H1 (cell line): ENCODE measurements at regions of chr3 and their contacts with region 1.

Region 1: GRCh38 chr3:128680602-128681368 is 30.2 kb upstream of the RPN1 start:
- DNase-seq: peak; percentile 98 to 99
- H3K4me3 ChIP-seq: peak overlapping the region; percentile 29 to 77 (median 66)
- H3K27ac ChIP-seq: peak overlapping the region; percentile 99
- H3K4me1 ChIP-seq: peaks cover 0 to 4% (median 2%) of the 10 kb centered on the region in 4 experiments; a peak in 1 of 7 replicates
- H3K27me3 ChIP-seq: peaks cover 3 to 17% (median 12%) of the 10 kb centered on the region in 4 experiments
- CTCF ChIP-seq: peak; percentile 95 to 100 (median 99)
- EP300 ChIP-seq: peak in 1 of 2 experiments; percentile 5; a peak in 2 of 3 replicates
- POLR2A ChIP-seq: peak; percentile 78 to 91
- RAD21 ChIP-seq: peak; percentile 78 to 79

Region 2: GRCh38 chr3:128383316-128384235 is 297.2 kb before region 1 on chr3:
- CTCF ChIA-PET with region 1: no interaction called
- POLR2A ChIA-PET with region 1: no interaction called
- DNase-seq: no peak
- H3K4me3 ChIP-seq: no peak overlapping the region
- H3K27ac ChIP-seq: no peak overlapping the region
- H3K4me1 ChIP-seq: no peaks in the 10 kb centered on the region
- H3K27me3 ChIP-seq: no peaks in the 10 kb centered on the region
- CTCF ChIP-seq: no peak
- EP300 ChIP-seq: no peak
- POLR2A ChIP-seq: no peak
- RAD21 ChIP-seq: no peak

Region 3: GRCh38 chr3:128650096-128651050 is 30.4 kb before region 1 on chr3 and contains the start of gene RPN1:
- CTCF ChIA-PET with region 1: interaction called, 6 read pairs
- POLR2A ChIA-PET with region 1: interaction called, 13 read pairs
- DNase-seq: peak; percentile 57 to 95
- H3K4me3 ChIP-seq: peak within 1 kb of the TSS; percentile 90 to 100 (median 98)
- H3K27ac ChIP-seq: peak within 1 kb of the TSS; percentile 95
- H3K4me1 ChIP-seq: no peaks in the 10 kb centered on the region; a peak in 2 of 7 replicates
- H3K27me3 ChIP-seq: no peaks in the 10 kb centered on the region
- CTCF ChIP-seq: no peak
- EP300 ChIP-seq: no peak; a peak in 1 of 3 replicates
- POLR2A ChIP-seq: peak; percentile 75 to 94
- RAD21 ChIP-seq: no peak
- total RNA-seq, gene RPN1: 204 and 211 TPM in 2 replicates

Region 4: DNA sequence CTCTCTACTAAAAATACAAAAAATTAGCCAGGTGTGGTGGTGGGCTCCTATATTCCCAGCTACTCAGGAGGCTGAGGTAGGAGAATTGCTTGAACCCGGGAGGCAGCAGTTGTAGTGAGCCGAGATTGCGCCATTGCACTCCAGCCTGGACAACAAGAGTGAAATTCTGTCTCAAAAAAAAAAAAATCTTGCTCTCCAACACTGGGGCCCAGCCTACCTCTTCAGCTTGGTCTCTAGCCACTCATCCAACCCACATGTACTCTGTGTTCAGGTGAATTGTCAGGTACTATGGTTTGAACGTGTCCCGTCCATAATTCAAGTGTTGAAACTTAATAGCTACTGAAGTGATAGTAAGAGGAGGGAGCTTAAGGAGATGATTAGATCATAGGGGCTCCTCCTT is 22.8 kb after region 1 on chr3:
- CTCF ChIA-PET with region 1: interaction called, 15 read pairs
- POLR2A ChIA-PET with region 1: interaction called, 5 read pairs
- DNase-seq: no peak
- H3K4me3 ChIP-seq: no peak overlapping the region
- H3K27ac ChIP-seq: no peak overlapping the region
- H3K4me1 ChIP-seq: no peaks in the 10 kb centered on the region; a peak in 1 of 7 replicates
- H3K27me3 ChIP-seq: peaks cover 0 to 3% (median 3%) of the 10 kb centered on the region in 4 experiments; a peak in 1 of 7 replicates
- CTCF ChIP-seq: no peak
- EP300 ChIP-seq: no peak
- POLR2A ChIP-seq: no peak
- RAD21 ChIP-seq: no peak

Region 5: DNA sequence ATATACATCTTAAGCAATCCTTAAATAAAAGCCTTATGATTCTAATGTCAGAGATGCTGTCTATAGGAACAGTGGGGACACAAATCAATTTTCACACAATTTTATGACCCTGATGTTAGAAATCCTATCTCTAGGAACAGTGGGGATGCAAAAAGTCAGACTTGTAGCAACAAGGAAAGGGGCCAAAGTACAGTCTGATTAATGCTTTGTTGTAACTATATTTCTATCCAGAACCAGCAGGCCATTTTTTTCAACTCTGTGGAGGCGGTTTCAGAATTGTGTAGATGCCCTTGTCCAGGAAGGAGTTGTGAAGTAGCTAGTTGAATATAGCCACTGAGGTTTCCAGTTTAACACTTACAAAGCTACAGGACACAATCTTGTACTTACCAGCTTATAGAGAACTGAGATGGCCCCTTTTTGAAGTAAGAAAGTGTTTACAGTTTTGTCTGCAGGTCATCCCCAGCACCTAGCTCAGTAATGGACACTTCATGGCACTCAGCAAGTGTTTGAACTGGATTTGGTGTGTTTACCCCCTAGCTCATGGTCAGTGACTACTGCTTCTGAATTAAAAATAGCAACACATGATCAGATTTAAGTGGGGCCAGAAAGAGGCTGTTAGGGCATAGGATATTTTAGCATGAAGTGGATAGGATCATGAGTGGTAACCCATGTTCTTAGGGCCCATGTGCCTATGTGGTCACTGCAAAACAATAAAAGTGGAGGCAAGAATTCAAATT is 99.5 kb after region 1 on chr3:
- CTCF ChIA-PET with region 1: interaction called, 18 read pairs
- POLR2A ChIA-PET with region 1: interaction called, 3 read pairs
- DNase-seq: no peak
- H3K4me3 ChIP-seq: no peak overlapping the region
- H3K27ac ChIP-seq: no peak overlapping the region
- H3K4me1 ChIP-seq: peaks cover 2 to 13% (median 8%) of the 10 kb centered on the region in 4 experiments; a peak in 5 of 7 replicates
- H3K27me3 ChIP-seq: no peaks in the 10 kb centered on the region
- CTCF ChIP-seq: no peak
- EP300 ChIP-seq: no peak
- POLR2A ChIP-seq: no peak
- RAD21 ChIP-seq: no peak

Region 6: GRCh38 chr3:128794770-128795649 is 114.2 kb after region 1 on chr3:
- CTCF ChIA-PET with region 1: interaction called, 64 read pairs
- POLR2A ChIA-PET with region 1: interaction called, 13 read pairs
- DNase-seq: peak; percentile 17 to 72
- H3K4me3 ChIP-seq: no peak overlapping the region
- H3K27ac ChIP-seq: no peak overlapping the region
- H3K4me1 ChIP-seq: peaks cover 0 to 1% (median 0%) of the 10 kb centered on the region in 4 experiments; a peak in 2 of 7 replicates
- H3K27me3 ChIP-seq: no peaks in the 10 kb centered on the region
- CTCF ChIP-seq: peak; percentile 61 to 91 (median 77)
- EP300 ChIP-seq: no peak
- POLR2A ChIP-seq: no peak
- RAD21 ChIP-seq: peak; percentile 78 to 84

Region 7: GRCh38 chr3:129132097-129132866 is 451.5 kb after region 1 on chr3:
- CTCF ChIA-PET with region 1: no interaction called
- POLR2A ChIA-PET with region 1: no interaction called
- DNase-seq: no peak
- H3K4me3 ChIP-seq: no peak overlapping the region
- H3K27ac ChIP-seq: no peak overlapping the region
- H3K4me1 ChIP-seq: no peaks in the 10 kb centered on the region
- H3K27me3 ChIP-seq: no peaks in the 10 kb centered on the region
- CTCF ChIP-seq: no peak
- EP300 ChIP-seq: no peak
- POLR2A ChIP-seq: no peak
- RAD21 ChIP-seq: no peak